ENCODE measurements at regions of chr17 and their contacts with region 1.

Region 1: GRCh38 chr17:9273428-9274391 is 252.4 kb downstream of the NTN1 start:
- DNase-seq: no peak
- ATAC-seq: no peak
- H3K4me3 ChIP-seq: no peak overlapping the region
- H3K27ac ChIP-seq: no peak overlapping the region
- H3K4me1 ChIP-seq: no peaks in the 10 kb centered on the region
- H3K27me3 ChIP-seq: no peaks in the 10 kb centered on the region
- CTCF ChIP-seq: no peak

Region 2: DNA sequence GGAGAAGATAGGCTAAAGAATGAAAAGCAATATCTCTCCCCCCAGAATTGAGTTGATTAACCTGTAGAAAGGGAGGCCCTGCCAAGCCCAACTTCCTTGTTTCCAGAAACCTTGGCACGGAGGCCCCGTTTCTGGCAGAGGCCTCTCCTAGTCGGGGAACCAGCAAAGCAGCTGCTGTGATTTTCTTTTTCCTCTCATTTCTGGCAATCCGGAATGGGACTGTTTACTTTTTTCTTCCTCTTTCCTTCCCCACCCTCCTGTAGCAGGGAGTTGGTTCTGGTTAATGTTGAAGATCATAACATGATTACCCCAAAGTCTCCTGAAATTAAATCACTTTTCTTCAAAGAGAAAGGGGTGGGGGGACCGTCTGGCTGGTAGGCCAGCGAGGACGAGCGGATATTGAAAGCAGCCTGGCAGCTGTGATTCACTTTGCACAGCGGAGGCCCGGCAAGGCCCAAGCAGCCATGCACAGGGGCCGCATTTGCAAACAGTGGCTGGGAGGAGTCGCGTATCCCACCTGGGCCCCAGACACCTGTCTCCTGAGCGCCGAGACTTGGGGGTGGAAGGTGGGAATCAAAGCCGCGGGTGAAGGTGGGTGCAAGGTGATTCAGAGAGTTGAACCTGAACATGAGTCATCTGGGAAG is 200.9 kb before region 1 on chr17:
- CTCF ChIA-PET with region 1: interaction called, 14 read pairs
- POLR2A ChIA-PET with region 1: no interaction called
- in situ Hi-C with region 1: no loop called
- intact Hi-C with region 1: no loop called
- DNase-seq: no peak
- ATAC-seq: no peak
- H3K4me3 ChIP-seq: no peak overlapping the region
- H3K27ac ChIP-seq: no peak overlapping the region
- H3K4me1 ChIP-seq: no peaks in the 10 kb centered on the region
- H3K27me3 ChIP-seq: no peaks in the 10 kb centered on the region
- CTCF ChIP-seq: no peak

Region 3: GRCh38 chr17:10879190-10879836 is 1605.6 kb after region 1 on chr17:
- CTCF ChIA-PET with region 1: no interaction called
- POLR2A ChIA-PET with region 1: no interaction called
- in situ Hi-C with region 1: no loop called
- intact Hi-C with region 1: no loop called
- DNase-seq: no peak
- ATAC-seq: no peak
- H3K4me3 ChIP-seq: no peak overlapping the region
- H3K27ac ChIP-seq: no peak overlapping the region
- H3K4me1 ChIP-seq: no peaks in the 10 kb centered on the region
- H3K27me3 ChIP-seq: no peaks in the 10 kb centered on the region
- CTCF ChIP-seq: peak; percentile 63